ENCODE measurements at regions of chr3 and their contacts with region 1.

Region 1: DNA sequence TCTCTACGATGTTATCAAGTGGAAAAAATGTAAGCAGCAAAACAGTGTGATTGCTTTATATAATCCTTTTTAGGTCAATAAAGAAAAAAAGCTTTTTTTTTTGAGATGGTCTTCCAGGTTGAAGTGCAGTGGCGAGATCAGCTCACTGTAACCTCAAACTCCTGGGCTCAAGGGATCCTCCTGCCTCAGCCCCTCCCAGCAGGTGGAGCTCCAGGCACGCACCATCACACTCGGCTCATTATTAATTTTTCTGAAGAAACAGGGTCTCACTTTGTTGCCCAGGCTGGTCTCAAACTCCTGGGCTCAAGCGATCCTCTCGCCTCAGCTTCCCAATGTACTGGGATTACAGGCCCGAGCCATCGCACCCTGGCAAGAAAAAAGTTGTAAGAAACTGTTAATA is 17.3 kb downstream of the RNF168 start:
- DNase-seq: no peak
- ATAC-seq: peak in 3 of 4 donors; percentile 49 to 83 (median 74)
- H3K4me3 ChIP-seq: no peak overlapping the region
- H3K27ac ChIP-seq: no peak overlapping the region
- H3K4me1 ChIP-seq: no peaks in the 10 kb centered on the region
- H3K27me3 ChIP-seq: no peaks in the 10 kb centered on the region
- CTCF ChIP-seq: peak; percentile 63

Region 2: DNA sequence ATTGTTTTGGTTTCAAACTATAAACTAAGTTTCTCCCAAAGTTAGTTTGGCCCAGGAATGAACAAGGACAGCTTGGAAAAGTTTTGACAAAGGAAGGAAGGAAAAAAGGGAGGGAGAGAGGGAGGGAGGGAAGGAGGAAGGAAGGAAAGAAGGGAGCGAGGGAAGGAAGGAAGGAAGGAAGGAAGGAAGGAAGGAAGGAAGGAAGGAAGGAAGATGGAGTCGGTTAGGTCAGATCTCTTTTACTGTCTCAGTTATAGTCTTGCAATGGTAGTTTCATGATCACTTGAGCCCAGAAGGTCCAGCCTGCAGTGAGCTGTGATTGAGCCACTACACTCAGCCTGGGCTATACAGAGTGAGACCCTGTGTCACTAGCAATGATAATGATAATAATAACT is 41.8 kb before region 1 on chr3:
- intact Hi-C with region 1: no loop called
- DNase-seq: no peak
- ATAC-seq: no peak
- H3K4me3 ChIP-seq: no peak overlapping the region
- H3K27ac ChIP-seq: no peak overlapping the region
- H3K4me1 ChIP-seq: no peaks in the 10 kb centered on the region
- H3K27me3 ChIP-seq: no peaks in the 10 kb centered on the region
- CTCF ChIP-seq: no peak

Region 3: GRCh38 chr3:196518966-196519717 is 32.9 kb after region 1 on chr3:
- intact Hi-C with region 1: loop called (anchors 1 to 5 kb)
- DNase-seq: peak; percentile 53 to 75
- ATAC-seq: peak; percentile 82 to 88 (median 85)
- H3K4me3 ChIP-seq: no peak overlapping the region
- H3K27ac ChIP-seq: no peak overlapping the region
- H3K4me1 ChIP-seq: peaks cover 12% of the 10 kb centered on the region
- H3K27me3 ChIP-seq: no peaks in the 10 kb centered on the region
- CTCF ChIP-seq: peak; percentile 76

Region 4: DNA sequence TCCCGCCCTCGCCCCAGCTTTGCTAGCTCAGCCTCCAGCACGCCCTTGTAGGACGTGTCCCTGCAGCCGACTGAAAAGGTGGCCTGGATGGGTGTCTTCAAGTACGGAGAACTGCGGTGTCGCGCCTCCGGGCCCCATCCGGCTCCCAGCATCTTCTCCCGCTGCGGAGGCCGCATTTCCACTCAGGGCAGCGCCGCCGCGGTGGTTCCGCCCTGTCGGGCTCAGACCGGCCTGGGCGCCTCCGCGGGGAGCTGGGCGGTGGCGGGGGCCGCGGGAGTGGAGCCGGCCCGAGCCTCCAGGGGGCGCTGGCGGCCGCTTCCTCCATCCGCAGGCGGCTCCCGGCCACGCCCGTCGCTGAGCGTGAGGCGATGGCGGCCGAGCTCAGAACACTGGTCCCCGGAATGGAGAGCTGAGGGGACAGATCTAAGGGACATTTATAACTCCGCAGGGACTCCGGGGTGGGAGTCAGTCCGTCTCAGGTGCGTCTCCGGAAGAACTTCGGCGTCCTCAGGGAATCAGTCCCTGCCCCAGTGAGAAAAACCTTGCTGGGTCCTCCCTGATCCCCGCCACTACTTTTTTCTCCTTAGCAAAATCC is 42.5 kb after region 1 on chr3:
- intact Hi-C with region 1: loop called in 1 of 2 experiments (anchors 5 kb)
- DNase-seq: peak; percentile 82
- ATAC-seq: peak; percentile 86 to 98 (median 98)
- H3K4me3 ChIP-seq: peak overlapping the region; percentile 55
- H3K27ac ChIP-seq: no peak overlapping the region
- H3K4me1 ChIP-seq: no peaks in the 10 kb centered on the region
- H3K27me3 ChIP-seq: peaks cover 0 to 2% (median 2%) of the 10 kb centered on the region in 3 donors
- CTCF ChIP-seq: peak; percentile 61

Measured in psoas muscle (tissue), 8 donors.